Naive thymus-derived CD4-positive, alpha-beta T cell (primary cell): ENCODE measurements at regions of chr14 and their contacts with region 1.

Region 1: GRCh38 chr14:74945823-74946682 is 9.3 kb downstream of the PGF start:
- DNase-seq: peak; percentile 41 to 79 (median 61)
- ATAC-seq: peak; percentile 78
- H3K4me3 ChIP-seq: no peak overlapping the region
- H3K4me3 Mint-ChIP-seq: peak overlapping the region in 6 of 10 donors; percentile 32 to 67 (median 55)
- H3K27ac ChIP-seq: no peak overlapping the region
- H3K27ac Mint-ChIP-seq: peak overlapping the region in 8 of 9 donors; percentile 17 to 93 (median 52)
- H3K4me1 ChIP-seq: peaks cover 19 to 21% of the 10 kb centered on the region in 2 donors
- H3K4me1 Mint-ChIP-seq: peaks cover 21 to 35% (median 33%) of the 10 kb centered on the region in 7 donors
- H3K27me3 ChIP-seq: no peaks in the 10 kb centered on the region
- H3K27me3 Mint-ChIP-seq: no peaks in the 10 kb centered on the region

Region 2: DNA sequence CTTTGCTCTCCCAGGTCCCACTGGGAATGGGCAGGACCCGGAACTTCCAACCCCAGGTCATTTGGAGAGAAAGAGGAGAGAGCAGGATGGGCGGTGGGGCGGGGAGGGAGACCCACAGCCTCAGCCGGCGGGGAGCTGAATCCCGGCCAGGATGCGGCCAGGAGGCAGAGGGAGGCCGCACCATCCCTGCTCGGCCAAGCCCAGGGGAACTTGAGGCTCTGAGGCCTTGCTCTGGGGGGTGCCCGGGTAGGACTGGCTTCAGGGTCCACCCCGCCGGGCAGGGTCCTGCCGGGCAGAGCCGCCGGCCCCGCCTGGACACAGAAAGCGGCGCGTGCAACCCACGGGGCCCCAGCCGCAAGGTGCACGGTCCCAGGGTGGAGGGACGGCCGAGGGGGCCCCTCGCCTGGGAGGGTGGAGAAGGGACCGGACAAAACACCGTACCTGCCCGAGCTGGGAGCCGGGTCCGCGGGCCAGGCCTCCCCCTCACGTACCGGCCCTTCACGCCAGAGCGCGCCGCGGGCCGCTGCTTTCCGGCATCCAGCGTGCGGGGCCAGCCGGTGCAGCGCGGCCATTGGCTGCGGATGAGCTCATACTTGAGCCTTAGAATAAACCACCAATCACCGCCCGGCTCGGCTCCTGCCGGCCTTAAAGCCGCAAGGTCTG is 23.2 kb before region 1 on chr14 and contains the start of gene RPS6KL1:
- CTCF ChIA-PET with region 1: no interaction called
- POLR2A ChIA-PET with region 1: interaction called, 5 read pairs
- intact Hi-C with region 1: loop called in 1 of 2 experiments (anchors 1 kb)
- DNase-seq: peak; percentile 58 to 76 (median 69)
- ATAC-seq: peak; percentile 98
- H3K4me3 ChIP-seq: peak within 1 kb of the TSS; percentile 47
- H3K4me3 Mint-ChIP-seq: peak within 1 kb of the TSS; percentile 54 to 86 (median 68)
- H3K27ac ChIP-seq: peak within 1 kb of the TSS; percentile 77
- H3K27ac Mint-ChIP-seq: peak within 1 kb of the TSS in 8 of 9 donors; percentile 6 to 78 (median 60)
- H3K4me1 ChIP-seq: peaks cover 0 to 3% of the 10 kb centered on the region in 2 donors
- H3K4me1 Mint-ChIP-seq: peaks cover 0 to 16% (median 13%) of the 10 kb centered on the region in 7 donors
- H3K27me3 ChIP-seq: no peaks in the 10 kb centered on the region
- H3K27me3 Mint-ChIP-seq: peaks cover 0 to 19% (median 8%) of the 10 kb centered on the region in 5 donors
- total RNA-seq, gene RPS6KL1: 3.0 to 12.8 (median 6.3) TPM

Region 3: GRCh38 chr14:74973003-74973653 is 27.1 kb after region 1 on chr14:
- CTCF ChIA-PET with region 1: no interaction called
- POLR2A ChIA-PET with region 1: no interaction called
- intact Hi-C with region 1: no loop called
- DNase-seq: peak in 1 of 9 donors; percentile 13
- ATAC-seq: peak; percentile 65
- H3K4me3 ChIP-seq: no peak overlapping the region
- H3K4me3 Mint-ChIP-seq: no peak overlapping the region
- H3K27ac ChIP-seq: no peak overlapping the region
- H3K27ac Mint-ChIP-seq: no peak overlapping the region
- H3K4me1 ChIP-seq: no peaks in the 10 kb centered on the region
- H3K4me1 Mint-ChIP-seq: peaks cover 0 to 9% (median 5%) of the 10 kb centered on the region in 7 donors
- H3K27me3 ChIP-seq: no peaks in the 10 kb centered on the region
- H3K27me3 Mint-ChIP-seq: peaks cover 0 to 6% (median 0%) of the 10 kb centered on the region in 5 donors

Region 4: DNA sequence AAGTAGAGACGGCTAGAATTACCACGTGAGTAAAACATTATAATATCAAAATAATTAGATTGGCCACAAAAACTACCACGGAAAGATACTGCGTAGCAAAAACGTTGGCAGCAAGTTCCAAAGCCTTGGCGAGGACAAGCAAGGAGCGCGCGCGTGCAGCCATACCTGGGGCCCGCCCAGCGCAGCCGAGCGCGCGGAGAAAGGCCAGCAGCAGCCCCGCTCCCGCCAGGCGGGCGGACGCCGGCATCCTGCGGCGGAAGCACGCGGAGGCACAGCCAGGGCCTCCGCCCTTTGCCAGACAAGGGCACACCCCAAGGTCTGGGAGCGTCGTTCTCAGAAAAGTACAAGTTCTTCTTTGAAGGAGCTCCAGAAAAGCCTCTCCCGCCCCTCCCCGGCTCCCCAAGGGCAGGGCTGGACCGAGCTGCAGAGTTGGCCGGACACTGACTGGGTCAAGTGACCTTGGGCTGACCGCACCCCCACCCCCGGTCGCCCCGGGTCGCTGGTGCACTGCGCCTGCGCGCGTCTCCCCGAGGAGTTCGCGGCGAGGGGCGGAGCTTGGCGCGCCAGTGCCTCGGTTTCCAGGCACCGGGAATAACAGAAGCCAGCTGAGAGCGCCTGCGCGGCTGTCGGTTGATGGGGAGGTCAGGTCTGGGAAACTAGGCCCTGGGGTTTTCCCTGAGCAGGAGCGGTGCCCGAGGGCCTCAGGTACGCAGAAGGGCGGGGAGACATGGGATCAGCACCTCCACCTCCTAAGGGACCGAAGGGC is 123.2 kb after region 1 on chr14 and contains the start of gene ZC2HC1C:
- CTCF ChIA-PET with region 1: no interaction called
- POLR2A ChIA-PET with region 1: no interaction called
- intact Hi-C with region 1: loop called in 1 of 2 experiments (anchors 5 kb)
- DNase-seq: peak; percentile 11 to 82 (median 34)
- ATAC-seq: peak; percentile 85
- H3K4me3 ChIP-seq: peak within 1 kb of the TSS; percentile 69
- H3K4me3 Mint-ChIP-seq: peak within 1 kb of the TSS in 6 of 10 donors; percentile 36 to 82 (median 68)
- H3K27ac ChIP-seq: peak within 1 kb of the TSS; percentile 46
- H3K27ac Mint-ChIP-seq: peak within 1 kb of the TSS in 2 of 9 donors; percentile 15 to 81
- H3K4me1 ChIP-seq: peaks cover 7 to 8% of the 10 kb centered on the region in 2 donors
- H3K4me1 Mint-ChIP-seq: peaks cover 2 to 15% (median 6%) of the 10 kb centered on the region in 7 donors
- H3K27me3 ChIP-seq: no peaks in the 10 kb centered on the region
- H3K27me3 Mint-ChIP-seq: peaks cover 0 to 3% (median 0%) of the 10 kb centered on the region in 5 donors
- total RNA-seq, gene ZC2HC1C: 1.7 TPM in 1 of 5 experiments, not detected in the others

Region 5: DNA sequence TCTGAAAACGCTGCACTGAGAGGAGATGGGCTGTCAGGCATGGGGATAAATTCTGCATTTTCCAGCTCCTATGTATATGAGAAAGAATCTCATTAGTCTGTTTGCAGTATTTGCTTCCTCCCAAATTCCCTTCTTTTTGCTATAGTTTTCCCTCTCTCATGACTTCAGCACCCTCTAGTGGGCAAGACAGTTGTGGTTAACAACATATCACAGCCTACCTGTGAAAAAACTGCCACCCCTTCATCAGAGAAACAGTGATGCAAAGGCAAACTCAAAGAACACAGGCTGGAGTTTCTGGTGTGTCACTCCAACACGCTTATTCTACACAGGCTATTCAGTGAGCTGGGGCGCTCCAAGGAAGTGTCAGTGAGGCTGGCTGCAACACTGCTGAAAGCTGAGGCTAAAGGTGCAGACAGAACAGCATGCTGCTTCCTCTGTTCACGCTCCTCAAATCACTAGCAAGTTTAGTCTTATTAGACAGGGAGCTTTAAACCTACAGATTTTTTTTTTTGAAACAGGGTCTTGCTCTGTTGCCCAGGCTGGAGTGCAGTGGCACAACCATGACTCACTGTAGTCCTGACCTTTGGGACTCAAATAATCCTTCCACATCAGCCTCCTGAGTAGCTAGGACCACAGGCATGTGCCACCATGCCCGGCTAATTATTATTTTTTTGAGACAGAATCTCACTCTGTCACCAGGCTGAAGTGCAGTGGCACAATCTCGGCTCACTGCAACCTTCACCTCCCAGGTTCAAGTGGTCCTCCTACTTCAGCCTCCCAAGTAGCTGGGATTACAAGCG is 142.7 kb after region 1 on chr14:
- CTCF ChIA-PET with region 1: interaction called, 19 read pairs
- POLR2A ChIA-PET with region 1: interaction called, 3 read pairs
- intact Hi-C with region 1: loop called (anchors 1 kb)
- DNase-seq: peak in 7 of 9 donors; percentile 27 to 55 (median 47)
- ATAC-seq: peak; percentile 67
- H3K4me3 ChIP-seq: no peak overlapping the region
- H3K4me3 Mint-ChIP-seq: no peak overlapping the region
- H3K27ac ChIP-seq: no peak overlapping the region
- H3K27ac Mint-ChIP-seq: peak overlapping the region in 1 of 9 donors; percentile 40
- H3K4me1 ChIP-seq: no peaks in the 10 kb centered on the region
- H3K4me1 Mint-ChIP-seq: no peaks in the 10 kb centered on the region
- H3K27me3 ChIP-seq: no peaks in the 10 kb centered on the region
- H3K27me3 Mint-ChIP-seq: no peaks in the 10 kb centered on the region